Panc1 (cell line): ENCODE measurements at regions of chr14 and their contacts with region 1.

Region 1: DNA sequence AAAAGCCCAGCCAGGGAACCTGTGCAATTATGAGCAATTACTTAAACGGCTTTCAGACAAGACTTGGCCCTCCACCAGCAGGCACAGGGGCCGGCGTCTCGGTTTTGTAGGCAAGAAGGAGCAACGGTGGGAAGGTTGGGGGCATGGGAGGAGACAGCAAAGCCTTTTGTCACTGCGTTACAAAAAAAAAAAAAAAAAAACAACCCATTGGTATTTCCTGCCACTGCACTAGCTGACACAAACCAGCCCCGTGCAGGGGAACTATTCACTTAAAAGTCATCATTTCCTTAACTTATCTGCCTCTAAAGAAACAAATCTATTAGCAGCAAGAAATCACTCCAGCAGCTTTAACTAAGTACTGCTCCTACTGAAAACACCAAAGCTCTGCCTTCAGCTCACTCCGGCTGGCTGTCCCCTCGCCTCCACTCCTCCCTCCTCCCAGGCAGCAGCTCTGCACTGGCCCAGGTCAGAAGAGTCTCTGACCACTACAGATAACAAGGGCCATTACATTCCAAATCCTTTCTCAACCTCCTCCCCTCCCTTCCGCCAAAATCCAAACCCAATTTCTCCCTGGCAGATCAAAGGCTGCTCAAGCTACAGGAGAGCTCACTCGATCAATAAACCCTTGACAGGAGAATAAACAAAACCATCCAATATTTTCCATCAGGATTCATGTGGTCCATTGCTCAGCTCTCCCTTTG is 105.2 kb upstream of the CDKN3 start:
- DNase-seq: no peak
- ATAC-seq: no peak
- H3K4me3 ChIP-seq: no peak overlapping the region
- H3K27ac ChIP-seq: no peak overlapping the region
- H3K4me1 ChIP-seq: no peaks in the 10 kb centered on the region
- H3K27me3 ChIP-seq: no peaks in the 10 kb centered on the region; the same call in 1 of the 2 replicates
- CTCF ChIP-seq: no peak

Region 2: DNA sequence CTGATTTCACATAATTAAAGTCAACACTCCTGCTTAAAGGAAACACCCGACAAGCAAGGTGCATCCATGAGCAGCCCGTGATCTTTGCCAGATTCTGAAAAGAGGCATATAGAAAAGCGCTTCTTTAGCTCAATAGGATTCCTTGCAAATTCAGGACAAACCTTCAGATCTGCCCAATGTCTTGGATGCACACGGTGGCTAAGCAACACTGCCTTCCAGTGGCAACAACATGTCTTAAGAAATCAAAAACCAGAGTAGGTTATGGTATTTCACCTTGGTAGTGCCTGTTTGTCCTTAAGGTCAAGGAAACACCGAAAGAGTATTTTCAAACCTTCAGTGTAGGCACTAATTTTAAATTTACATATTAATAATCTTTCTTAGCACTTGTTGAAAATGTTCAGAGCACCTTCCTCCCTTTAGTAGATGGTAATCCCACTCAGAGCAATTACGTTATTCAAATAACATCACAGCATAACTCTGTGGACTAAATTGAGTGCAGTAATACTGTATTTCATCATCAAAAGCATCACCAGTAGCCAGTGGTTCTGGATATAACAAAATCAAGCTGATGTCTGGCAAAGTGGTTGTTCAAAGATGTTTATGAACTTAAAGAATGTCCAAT is 47.2 kb after region 1 on chr14:
- CTCF ChIA-PET with region 1: interaction called, 10 read pairs
- POLR2A ChIA-PET with region 1: no interaction called
- in situ Hi-C with region 1: no loop called
- intact Hi-C with region 1: no loop called
- DNase-seq: no peak
- ATAC-seq: no peak
- H3K4me3 ChIP-seq: no peak overlapping the region
- H3K27ac ChIP-seq: no peak overlapping the region
- H3K4me1 ChIP-seq: no peaks in the 10 kb centered on the region
- H3K27me3 ChIP-seq: peaks cover 4% of the 10 kb centered on the region; the same call in 1 of the 2 replicates
- CTCF ChIP-seq: peak; percentile 59

Region 3: DNA sequence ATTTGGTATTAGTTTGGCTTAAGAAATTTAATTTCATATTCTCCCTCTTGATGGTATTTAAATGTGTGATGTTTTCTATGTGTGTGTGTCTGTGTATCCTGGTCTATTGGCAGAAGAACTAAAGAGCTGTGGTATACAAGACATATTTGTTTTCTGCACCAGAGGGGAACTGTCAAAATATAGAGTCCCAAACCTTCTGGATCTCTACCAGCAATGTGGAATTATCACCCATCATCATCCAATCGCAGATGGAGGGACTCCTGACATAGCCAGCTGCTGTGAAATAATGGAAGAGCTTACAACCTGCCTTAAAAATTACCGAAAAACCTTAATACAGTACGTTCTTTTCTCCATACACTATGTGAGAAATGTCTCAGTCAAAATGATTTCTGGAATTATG is 119.7 kb after region 1 on chr14:
- CTCF ChIA-PET with region 1: no interaction called
- POLR2A ChIA-PET with region 1: no interaction called
- in situ Hi-C with region 1: no loop called
- intact Hi-C with region 1: no loop called
- DNase-seq: no peak
- ATAC-seq: no peak
- H3K4me3 ChIP-seq: no peak overlapping the region
- H3K27ac ChIP-seq: no peak overlapping the region
- H3K4me1 ChIP-seq: no peaks in the 10 kb centered on the region
- H3K27me3 ChIP-seq: no peaks in the 10 kb centered on the region
- CTCF ChIP-seq: no peak